IMR-90 (cell line): ENCODE measurements at regions of chr7 and their contacts with region 1.

Region 1: DNA sequence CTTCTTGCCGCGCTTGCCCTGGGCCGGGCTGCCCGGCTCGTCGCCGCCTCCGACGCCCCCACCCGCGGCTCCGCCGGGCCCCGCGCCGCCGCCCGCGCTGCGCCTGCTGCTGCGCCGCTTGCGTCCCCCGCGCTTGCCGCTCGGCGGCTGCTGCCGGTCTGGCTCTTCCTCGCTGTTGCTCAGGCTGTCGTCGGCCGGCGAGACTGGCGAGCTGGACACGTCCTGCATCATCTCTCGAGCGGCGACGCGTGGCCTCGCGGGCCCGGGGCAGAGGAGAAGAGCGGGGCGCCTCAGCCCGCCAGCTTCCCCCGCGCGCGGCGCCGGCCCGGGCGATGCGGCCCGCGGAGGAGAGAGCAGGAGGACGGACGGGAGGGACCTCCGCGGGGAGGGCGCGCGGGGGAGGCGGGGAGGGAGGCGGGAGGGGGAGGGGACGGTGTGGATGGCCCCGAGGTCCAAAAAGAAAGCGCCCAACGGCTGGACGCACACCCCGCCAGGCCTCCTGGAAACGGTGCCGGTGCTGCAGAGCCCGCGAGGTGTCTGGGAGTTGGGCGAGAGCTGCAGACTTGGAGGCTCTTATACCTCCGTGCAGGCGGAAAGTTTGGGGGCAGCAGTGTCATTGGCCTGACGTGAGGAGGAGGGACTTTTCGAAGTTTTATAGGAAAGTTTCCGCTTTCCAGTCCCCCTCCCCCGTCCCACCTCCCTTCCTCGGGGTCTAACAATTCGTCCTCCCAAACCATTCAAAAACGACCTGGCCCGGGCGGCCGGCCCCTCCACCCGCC is at the start of gene TWIST1:
- DNase-seq: peak; percentile 94
- ATAC-seq: peak; percentile 73
- H3K4me3 ChIP-seq: peak within 1 kb of the TSS; percentile 99
- H3K27ac ChIP-seq: peak within 1 kb of the TSS; percentile 94
- H3K4me1 ChIP-seq: peaks cover 1% of the 10 kb centered on the region
- H3K27me3 ChIP-seq: no peaks in the 10 kb centered on the region
- CTCF ChIP-seq: no peak
- POLR2A ChIP-seq: peak; percentile 89
- RAD21 ChIP-seq: no peak; the same call in 1 of the 2 replicates
- total RNA-seq, gene TWIST1: 5.4 and 18.6 TPM in 2 replicates

Region 2: DNA sequence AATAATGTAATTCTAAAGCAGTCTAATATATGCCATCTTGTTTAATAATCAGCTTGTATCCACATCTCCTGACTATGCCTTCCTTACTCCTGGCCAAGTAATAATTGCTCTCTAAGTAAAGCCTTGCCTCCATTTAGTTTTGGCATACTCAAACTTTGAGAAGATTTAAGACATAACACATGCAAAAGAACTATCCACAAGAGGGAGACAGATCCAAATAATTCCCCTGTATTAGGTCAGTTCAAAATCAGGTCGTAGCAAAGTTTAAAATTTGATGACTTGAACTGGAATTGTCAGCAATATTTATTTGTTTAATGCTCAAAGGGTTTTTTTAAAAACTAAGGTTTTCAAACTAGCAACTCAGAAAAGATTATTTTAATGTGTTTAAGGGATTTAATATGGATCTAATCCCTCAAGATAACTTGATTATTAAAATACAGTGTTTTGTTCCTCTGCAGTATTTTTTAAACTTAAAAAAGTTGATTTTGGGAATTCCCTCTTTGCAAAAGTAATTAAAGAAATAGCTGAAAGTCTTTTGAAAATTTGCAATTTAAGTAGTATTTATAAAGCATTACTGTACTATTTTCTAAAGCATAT is 526.4 kb before region 1 on chr7:
- CTCF ChIA-PET with region 1: no interaction called
- POLR2A ChIA-PET with region 1: no interaction called
- dilution Hi-C with region 1: no loop called
- in situ Hi-C with region 1: no loop called
- intact Hi-C with region 1: loop called (anchors 2 kb)
- DNase-seq: peak; percentile 67
- ATAC-seq: peak; percentile 80
- H3K4me3 ChIP-seq: no peak overlapping the region
- H3K27ac ChIP-seq: no peak overlapping the region
- H3K4me1 ChIP-seq: 0 out of 2 replicates have a peak, but pooled peaks cover 1% of the 10 kb centered on the region
- H3K27me3 ChIP-seq: no peaks in the 10 kb centered on the region
- CTCF ChIP-seq: peak; percentile 68
- POLR2A ChIP-seq: no peak
- RAD21 ChIP-seq: peak; percentile 81

Region 3: DNA sequence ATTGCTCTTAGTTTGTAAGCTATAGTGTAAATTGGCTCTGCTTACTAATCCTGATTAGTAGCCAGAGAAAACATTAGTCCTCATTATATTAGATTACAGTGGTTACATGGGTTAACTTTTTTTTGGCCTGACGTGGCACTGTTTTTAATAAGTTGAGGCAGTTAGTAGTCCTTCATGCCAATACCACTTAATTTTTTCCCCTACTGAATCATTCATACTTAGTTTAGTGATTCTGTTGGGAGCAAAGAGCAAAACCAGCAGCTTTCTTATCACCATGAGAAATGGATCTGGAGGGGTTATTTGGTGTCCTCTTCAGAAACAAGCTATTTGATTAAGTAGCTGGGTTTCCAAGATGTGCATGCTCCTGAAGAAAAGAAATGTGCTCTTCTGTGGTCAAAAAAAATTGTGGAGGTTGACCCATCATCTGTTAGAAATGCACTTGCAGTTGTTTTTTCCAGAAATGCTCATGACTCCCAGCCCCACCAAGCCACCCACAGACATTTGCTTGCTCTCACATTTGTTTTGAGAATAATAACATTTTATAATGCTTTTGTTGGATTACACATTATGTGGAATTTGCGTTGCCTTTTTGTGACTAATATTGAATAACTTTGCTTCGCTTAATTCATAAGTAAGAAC is 363.2 kb before region 1 on chr7:
- CTCF ChIA-PET with region 1: no interaction called
- POLR2A ChIA-PET with region 1: no interaction called
- dilution Hi-C with region 1: no loop called
- in situ Hi-C with region 1: no loop called
- intact Hi-C with region 1: loop called (anchors 10 kb)
- DNase-seq: peak; percentile 94
- ATAC-seq: peak; percentile 84
- H3K4me3 ChIP-seq: no peak overlapping the region
- H3K27ac ChIP-seq: no peak overlapping the region
- H3K4me1 ChIP-seq: peaks cover 3% of the 10 kb centered on the region; the same call in 1 of the 2 replicates
- H3K27me3 ChIP-seq: no peaks in the 10 kb centered on the region
- CTCF ChIP-seq: no peak
- POLR2A ChIP-seq: no peak
- RAD21 ChIP-seq: no peak

Region 4: DNA sequence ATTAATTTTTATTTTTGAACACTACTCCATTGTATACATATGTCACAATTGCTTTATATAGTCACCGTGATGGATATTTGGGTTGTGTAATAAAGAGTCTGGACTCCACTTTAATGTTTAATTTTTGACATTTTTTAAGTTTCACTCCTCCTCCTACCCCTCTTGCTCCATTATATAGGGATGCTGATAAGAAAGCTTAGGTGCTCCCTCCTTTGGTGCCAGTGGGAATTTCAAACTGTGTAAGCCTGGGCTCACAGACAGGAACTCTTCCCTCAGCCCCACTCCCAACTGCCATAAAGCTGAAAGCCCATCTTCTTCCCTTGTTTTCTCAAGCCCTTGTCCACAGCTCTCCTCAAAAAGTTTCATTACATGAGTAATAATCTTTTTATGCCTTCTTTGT is 47.4 kb before region 1 on chr7:
- CTCF ChIA-PET with region 1: no interaction called
- POLR2A ChIA-PET with region 1: no interaction called
- dilution Hi-C with region 1: no loop called
- in situ Hi-C with region 1: no loop called
- intact Hi-C with region 1: loop called (anchors 1 kb)
- DNase-seq: peak; percentile 24
- ATAC-seq: peak; percentile 62
- H3K4me3 ChIP-seq: no peak overlapping the region
- H3K27ac ChIP-seq: no peak overlapping the region
- H3K4me1 ChIP-seq: no peaks in the 10 kb centered on the region
- H3K27me3 ChIP-seq: no peaks in the 10 kb centered on the region
- CTCF ChIP-seq: peak; percentile 30; the same call in 1 of the 2 replicates
- POLR2A ChIP-seq: no peak
- RAD21 ChIP-seq: peak; percentile 45

Region 5: GRCh38 chr7:19442016-19442785 is 324.9 kb after region 1 on chr7:
- CTCF ChIA-PET with region 1: interaction called, 18 read pairs
- POLR2A ChIA-PET with region 1: interaction called, 3 read pairs
- dilution Hi-C with region 1: no loop called
- in situ Hi-C with region 1: loop called (anchors 5 kb)
- intact Hi-C with region 1: loop called (anchors 1 kb)
- DNase-seq: peak; percentile 75
- ATAC-seq: peak; percentile 99
- H3K4me3 ChIP-seq: no peak overlapping the region
- H3K27ac ChIP-seq: no peak overlapping the region
- H3K4me1 ChIP-seq: no peaks in the 10 kb centered on the region
- H3K27me3 ChIP-seq: no peaks in the 10 kb centered on the region
- CTCF ChIP-seq: peak; percentile 83
- POLR2A ChIP-seq: no peak
- RAD21 ChIP-seq: peak; percentile 91

Region 6: DNA sequence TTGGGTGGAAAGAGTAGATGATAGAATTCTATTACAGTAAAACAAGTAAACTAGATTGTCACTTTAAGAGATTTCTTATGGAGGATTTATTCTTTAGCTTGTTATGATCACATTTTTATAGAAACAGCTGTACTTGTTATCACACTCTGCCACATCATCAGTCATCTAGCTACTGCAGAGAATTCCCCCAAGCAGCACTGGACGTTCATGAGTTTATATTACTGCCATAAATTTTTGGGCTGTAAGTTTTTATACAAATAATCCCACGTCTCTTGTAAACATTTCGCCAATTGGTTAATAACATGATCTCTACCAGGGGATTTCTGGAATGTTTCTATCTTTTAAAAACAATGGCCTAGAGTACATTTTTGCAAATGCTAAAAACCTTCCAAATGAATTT is 352.8 kb after region 1 on chr7:
- CTCF ChIA-PET with region 1: no interaction called
- POLR2A ChIA-PET with region 1: no interaction called
- dilution Hi-C with region 1: no loop called
- in situ Hi-C with region 1: no loop called
- intact Hi-C with region 1: no loop called
- DNase-seq: peak; percentile 84
- ATAC-seq: peak; percentile 92
- H3K4me3 ChIP-seq: no peak overlapping the region
- H3K27ac ChIP-seq: no peak overlapping the region; the same call in 1 of the 2 replicates
- H3K4me1 ChIP-seq: no peaks in the 10 kb centered on the region
- H3K27me3 ChIP-seq: no peaks in the 10 kb centered on the region
- CTCF ChIP-seq: no peak
- POLR2A ChIP-seq: no peak
- RAD21 ChIP-seq: no peak

Region 7: GRCh38 chr7:19665399-19666008 is 548.2 kb after region 1 on chr7:
- CTCF ChIA-PET with region 1: no interaction called
- POLR2A ChIA-PET with region 1: interaction called, 3 read pairs
- dilution Hi-C with region 1: no loop called
- in situ Hi-C with region 1: no loop called
- intact Hi-C with region 1: loop called (anchors 1 kb)
- DNase-seq: peak; percentile 50
- ATAC-seq: 0 out of 2 replicates have a peak, but pooled peaks have one; percentile 54
- H3K4me3 ChIP-seq: no peak overlapping the region
- H3K27ac ChIP-seq: no peak overlapping the region
- H3K4me1 ChIP-seq: no peaks in the 10 kb centered on the region
- H3K27me3 ChIP-seq: no peaks in the 10 kb centered on the region
- CTCF ChIP-seq: peak; percentile 67
- POLR2A ChIP-seq: no peak
- RAD21 ChIP-seq: peak; percentile 59